Activated naive CD4-positive, alpha-beta T cell treated with anti-CD3 and anti-CD28 coated beads for 36 hours (primary cell): ENCODE measurements at regions of chrX and their contacts with region 1.

Region 1: GRCh38 chrX:53093748-53094583 is at the start of gene KANTR:
- DNase-seq: peak; percentile 90
- H3K4me3 Mint-ChIP-seq: peak within 1 kb of the TSS; percentile 91
- H3K27ac Mint-ChIP-seq: peak within 1 kb of the TSS; percentile 91
- H3K4me1 Mint-ChIP-seq: peaks cover 13% of the 10 kb centered on the region
- H3K27me3 Mint-ChIP-seq: no peaks in the 10 kb centered on the region
- total RNA-seq, gene KANTR: 7.5 to 9.2 TPM

Region 2: DNA sequence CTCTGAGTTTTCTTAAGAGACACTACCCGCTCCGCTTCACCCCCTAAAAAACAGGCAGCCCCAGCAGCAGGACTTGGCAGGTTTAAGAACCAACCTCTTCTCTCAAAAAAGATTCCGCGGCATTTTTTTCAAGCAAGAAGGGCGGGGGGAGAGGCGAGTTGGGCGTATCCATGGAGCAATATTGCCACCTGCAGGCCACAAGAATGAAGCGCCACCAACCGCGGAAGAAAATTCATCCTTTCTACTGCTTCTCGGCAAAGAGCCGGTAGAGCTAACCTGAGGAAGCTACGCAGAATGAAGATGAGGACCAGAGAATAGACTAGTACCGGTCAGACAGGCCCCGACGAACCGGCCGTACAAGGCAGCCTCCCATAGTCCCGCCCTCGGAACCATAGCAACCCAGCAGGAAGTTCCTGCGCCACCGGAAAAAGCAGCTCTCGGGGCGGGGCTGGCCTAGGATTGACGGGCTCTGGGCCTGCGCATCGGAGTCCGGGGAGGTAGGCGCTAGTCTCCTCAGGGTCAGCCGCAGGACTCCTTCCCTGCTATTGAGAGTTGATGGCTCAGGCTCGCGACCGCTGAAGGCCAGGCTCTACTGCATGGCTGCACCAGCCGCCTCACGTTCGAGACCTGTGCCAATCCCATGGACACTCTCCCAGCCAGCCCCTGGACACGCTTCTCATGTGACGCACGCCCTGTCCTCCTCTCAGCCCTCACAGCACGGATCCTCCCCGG is 832.3 kb before region 1 on chrX:
- CTCF ChIA-PET with region 1: no interaction called
- intact Hi-C with region 1: loop called (anchors 10 kb)
- DNase-seq: peak; percentile 91
- H3K4me3 Mint-ChIP-seq: peak overlapping the region; percentile 90
- H3K27ac Mint-ChIP-seq: peak overlapping the region; percentile 98
- H3K4me1 Mint-ChIP-seq: peaks cover 1% of the 10 kb centered on the region
- H3K27me3 Mint-ChIP-seq: peaks cover 2% of the 10 kb centered on the region

Region 3: DNA sequence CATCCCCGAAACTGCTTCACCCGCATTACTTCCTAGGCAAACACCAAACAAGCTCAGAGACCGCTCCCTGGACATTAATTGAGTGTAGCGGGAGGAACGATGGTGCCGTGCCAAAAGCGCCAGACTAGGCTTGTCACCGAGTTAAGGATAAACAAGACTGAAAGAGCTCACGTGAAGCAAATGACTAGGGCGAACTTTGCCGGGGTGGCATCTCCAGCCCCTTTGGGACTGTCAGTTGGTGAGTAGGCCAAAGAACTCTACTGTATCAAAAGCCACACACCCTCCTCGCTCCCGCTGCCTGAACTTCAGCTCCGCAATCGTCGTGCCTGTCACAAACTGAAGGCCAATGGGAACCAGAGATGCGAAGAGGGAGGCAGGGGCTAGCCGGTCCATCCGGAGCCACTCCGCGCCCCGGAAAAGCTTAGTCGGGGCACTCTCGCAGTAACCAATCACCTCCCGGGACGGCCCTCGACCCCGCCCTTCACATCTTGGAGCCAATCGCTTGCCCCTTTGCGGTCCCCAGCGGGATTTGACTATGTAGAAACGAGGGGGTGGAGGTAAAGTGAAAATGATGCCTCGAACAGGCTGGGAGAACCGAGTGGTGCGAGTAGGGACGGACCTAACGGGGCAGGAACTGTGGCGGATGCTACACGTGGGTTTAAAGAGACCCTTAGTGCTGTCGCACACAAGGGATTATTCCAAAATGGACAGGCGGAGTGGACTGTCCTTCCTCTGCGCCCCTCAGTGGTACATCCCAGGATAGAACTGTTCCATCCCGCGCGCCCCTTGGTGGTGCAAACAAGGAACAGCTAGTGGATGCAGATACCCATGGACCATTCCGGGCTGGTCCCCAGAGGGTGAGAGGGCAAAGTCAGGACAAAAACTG is 98.6 kb before region 1 on chrX:
- CTCF ChIA-PET with region 1: no interaction called
- intact Hi-C with region 1: loop called (anchors 1 kb)
- DNase-seq: peak; percentile 95
- H3K4me3 Mint-ChIP-seq: peak overlapping the region; percentile 96
- H3K27ac Mint-ChIP-seq: peak overlapping the region; percentile 100
- H3K4me1 Mint-ChIP-seq: peaks cover 20% of the 10 kb centered on the region
- H3K27me3 Mint-ChIP-seq: no peaks in the 10 kb centered on the region

Region 4: DNA sequence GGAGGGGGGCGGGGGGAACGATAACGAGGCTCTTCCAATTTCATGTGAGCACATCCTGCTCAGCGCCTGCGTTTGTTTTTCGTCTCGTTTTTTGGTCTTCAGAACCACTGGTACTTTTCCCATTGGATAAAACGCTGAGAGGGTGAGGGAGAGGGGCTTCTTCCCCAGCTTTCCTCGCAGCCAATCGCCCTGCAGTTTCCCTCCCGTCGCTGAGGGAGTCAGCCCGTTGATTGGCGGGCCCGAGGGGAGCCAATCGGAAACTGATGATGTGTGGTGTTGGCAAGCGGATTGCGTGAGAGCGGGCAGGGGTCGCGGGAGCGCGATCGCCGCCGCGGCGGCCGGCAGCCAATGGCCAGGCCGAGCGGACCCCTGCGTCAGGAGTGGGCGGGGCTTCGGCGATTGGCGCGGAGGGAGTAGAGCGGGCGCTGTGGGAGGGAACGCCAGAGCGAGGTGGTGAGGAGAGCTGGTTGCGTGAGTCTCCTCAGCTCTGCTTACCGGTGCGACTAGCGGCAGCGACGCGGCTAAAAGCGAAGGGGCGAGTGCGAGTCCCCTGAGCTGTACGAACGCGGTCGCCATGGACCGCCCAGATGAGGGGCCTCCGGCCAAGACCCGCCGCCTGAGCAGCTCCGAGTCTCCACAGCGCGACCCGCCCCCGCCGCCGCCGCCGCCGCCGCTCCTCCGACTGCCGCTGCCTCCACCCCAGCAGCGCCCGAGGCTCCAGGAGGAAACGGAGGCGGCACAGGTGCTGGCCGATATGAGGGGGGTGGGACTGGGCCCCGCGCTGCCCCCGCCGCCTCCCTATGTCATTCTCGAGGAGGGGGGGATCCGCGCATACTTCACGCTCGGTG is 11.8 kb before region 1 on chrX and contains the start of gene TSPYL2:
- CTCF ChIA-PET with region 1: interaction called, 3 read pairs
- intact Hi-C with region 1: loop called (anchors 1 kb)
- DNase-seq: peak; percentile 93
- H3K4me3 Mint-ChIP-seq: peak within 1 kb of the TSS; percentile 90
- H3K27ac Mint-ChIP-seq: peak within 1 kb of the TSS; percentile 94
- H3K4me1 Mint-ChIP-seq: peaks cover 48% of the 10 kb centered on the region
- H3K27me3 Mint-ChIP-seq: no peaks in the 10 kb centered on the region
- total RNA-seq, gene TSPYL2: 72.2 to 74.4 TPM

Region 5: DNA sequence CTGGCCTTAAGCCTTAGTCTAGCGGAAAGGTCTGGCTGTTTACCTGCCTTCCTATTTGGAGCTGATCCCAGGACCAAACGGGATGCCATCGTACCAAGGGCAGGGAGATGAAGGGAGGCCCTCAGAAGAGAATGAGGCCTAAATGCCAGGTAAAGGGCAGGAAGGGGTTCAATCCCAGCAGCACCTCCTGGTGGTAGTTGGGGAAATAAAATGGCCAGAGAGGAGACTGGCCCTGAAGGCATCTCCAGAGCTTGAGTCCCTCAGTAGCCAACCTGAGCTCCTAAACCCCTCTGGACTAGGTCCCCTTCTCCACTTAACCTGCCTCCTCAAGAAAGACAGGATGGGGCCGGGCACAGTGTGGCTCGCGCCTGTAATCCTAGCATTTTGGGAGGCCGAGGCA is 77.4 kb after region 1 on chrX:
- CTCF ChIA-PET with region 1: no interaction called
- intact Hi-C with region 1: no loop called
- DNase-seq: no peak
- H3K4me3 Mint-ChIP-seq: no peak overlapping the region
- H3K27ac Mint-ChIP-seq: no peak overlapping the region
- H3K4me1 Mint-ChIP-seq: no peaks in the 10 kb centered on the region
- H3K27me3 Mint-ChIP-seq: no peaks in the 10 kb centered on the region

Region 6: GRCh38 chrX:53422086-53422860 is 328.3 kb after region 1 on chrX and contains the start of gene SMC1A:
- CTCF ChIA-PET with region 1: no interaction called
- intact Hi-C with region 1: loop called (anchors 5 kb)
- DNase-seq: peak; percentile 97
- H3K4me3 Mint-ChIP-seq: peak within 1 kb of the TSS; percentile 88
- H3K27ac Mint-ChIP-seq: peak within 1 kb of the TSS; percentile 97
- H3K4me1 Mint-ChIP-seq: peaks cover 30% of the 10 kb centered on the region
- H3K27me3 Mint-ChIP-seq: no peaks in the 10 kb centered on the region
- total RNA-seq, gene SMC1A: 169 to 170 TPM